IMR-90 (cell line): ENCODE measurements at regions of chr14 and their contacts with region 1.

Region 1: GRCh38 chr14:38208618-38209562 is 1.2 kb downstream of the SSTR1 start:
- DNase-seq: peak; percentile 74
- ATAC-seq: peak; percentile 79
- H3K4me3 ChIP-seq: peak overlapping the region; percentile 61
- H3K27ac ChIP-seq: peak overlapping the region; percentile 8; the same call in 1 of the 2 replicates
- H3K4me1 ChIP-seq: peaks cover 11% of the 10 kb centered on the region; the same call in 1 of the 2 replicates
- H3K27me3 ChIP-seq: no peaks in the 10 kb centered on the region
- CTCF ChIP-seq: peak; percentile 53
- POLR2A ChIP-seq: no peak
- RAD21 ChIP-seq: peak; percentile 63

Region 2: DNA sequence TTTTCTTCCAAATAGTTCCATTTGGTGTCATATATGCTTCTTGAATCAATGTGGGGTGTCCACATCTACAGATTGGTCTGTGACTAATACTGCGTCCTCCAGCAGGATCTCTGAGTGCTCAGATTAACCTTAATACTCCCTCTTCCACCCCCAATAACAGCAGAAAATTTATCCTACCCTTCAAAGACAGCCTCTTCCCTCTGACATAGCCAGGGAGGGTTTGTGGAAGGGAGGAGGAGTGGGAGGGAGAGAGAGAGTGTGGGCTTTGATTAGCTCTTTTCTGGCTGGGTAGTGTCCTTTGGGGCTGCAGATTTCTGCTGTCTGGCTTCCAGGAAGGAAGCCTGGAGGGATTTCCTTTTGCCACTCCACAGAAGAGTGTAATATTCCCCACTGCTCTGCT is 392.8 kb before region 1 on chr14:
- CTCF ChIA-PET with region 1: no interaction called
- POLR2A ChIA-PET with region 1: no interaction called
- dilution Hi-C with region 1: no loop called
- in situ Hi-C with region 1: no loop called
- intact Hi-C with region 1: no loop called
- DNase-seq: no peak
- ATAC-seq: no peak
- H3K4me3 ChIP-seq: no peak overlapping the region
- H3K27ac ChIP-seq: no peak overlapping the region
- H3K4me1 ChIP-seq: no peaks in the 10 kb centered on the region
- H3K27me3 ChIP-seq: peaks cover 2% of the 10 kb centered on the region; the same call in 1 of the 2 replicates
- CTCF ChIP-seq: no peak
- POLR2A ChIP-seq: no peak
- RAD21 ChIP-seq: no peak

Region 3: DNA sequence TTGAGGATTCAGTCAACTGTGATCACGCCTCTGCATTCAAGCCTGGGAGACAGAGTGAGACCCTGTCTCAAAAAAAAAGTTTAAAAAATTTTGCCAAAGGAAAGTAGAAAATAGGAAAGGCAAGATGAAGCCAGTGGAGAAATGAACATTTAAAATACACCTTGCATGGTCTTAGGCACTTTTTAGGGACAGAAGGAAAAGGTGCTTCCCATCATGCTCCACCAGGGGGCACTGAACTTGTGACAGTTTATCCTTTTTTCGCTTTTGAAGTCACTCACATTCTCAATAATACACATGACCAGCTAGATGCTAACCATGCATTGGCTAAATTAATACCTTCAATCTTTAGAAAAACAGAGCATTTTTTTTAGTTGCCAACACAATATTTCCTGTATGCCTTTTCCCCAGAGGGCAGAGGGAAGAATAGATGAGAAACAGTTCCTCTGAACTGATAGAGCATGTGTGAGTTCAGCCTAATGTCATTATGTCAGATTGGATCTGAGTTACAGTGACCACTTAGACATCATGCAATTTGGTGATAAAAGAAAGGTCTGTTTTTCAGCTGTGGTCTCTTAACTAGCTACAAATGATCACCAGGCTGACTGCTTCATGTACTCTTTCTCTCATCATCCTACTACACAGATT is 222.9 kb before region 1 on chr14:
- CTCF ChIA-PET with region 1: no interaction called
- POLR2A ChIA-PET with region 1: no interaction called
- dilution Hi-C with region 1: no loop called
- in situ Hi-C with region 1: no loop called
- intact Hi-C with region 1: loop called (anchors 1 kb)
- DNase-seq: peak; percentile 65
- ATAC-seq: peak; percentile 62; the same call in 1 of the 2 replicates
- H3K4me3 ChIP-seq: no peak overlapping the region
- H3K27ac ChIP-seq: no peak overlapping the region
- H3K4me1 ChIP-seq: no peaks in the 10 kb centered on the region
- H3K27me3 ChIP-seq: no peaks in the 10 kb centered on the region
- CTCF ChIP-seq: peak; percentile 77
- POLR2A ChIP-seq: no peak
- RAD21 ChIP-seq: peak; percentile 70

Region 4: DNA sequence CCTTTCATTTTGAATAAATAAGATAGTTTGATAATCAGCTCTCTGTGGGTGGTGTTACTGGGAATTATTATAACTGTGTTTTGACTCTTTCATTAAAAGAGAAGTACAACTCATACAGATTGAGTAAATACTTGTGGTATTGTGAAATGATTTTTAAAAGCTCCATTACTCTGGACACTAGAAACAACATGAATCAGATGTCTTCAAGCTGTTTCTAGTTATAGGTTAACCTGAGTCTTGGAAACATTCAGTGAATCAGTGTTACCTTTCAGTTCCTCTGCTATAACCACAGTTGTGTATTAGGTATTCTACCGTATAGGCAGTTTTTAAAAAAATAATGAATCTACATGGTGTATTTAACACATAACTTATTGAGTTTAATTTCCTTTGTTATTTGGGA is 129.6 kb before region 1 on chr14:
- CTCF ChIA-PET with region 1: no interaction called
- POLR2A ChIA-PET with region 1: no interaction called
- dilution Hi-C with region 1: no loop called
- in situ Hi-C with region 1: no loop called
- intact Hi-C with region 1: no loop called
- DNase-seq: peak; percentile 43
- ATAC-seq: peak; percentile 61
- H3K4me3 ChIP-seq: no peak overlapping the region
- H3K27ac ChIP-seq: no peak overlapping the region
- H3K4me1 ChIP-seq: peaks cover 2% of the 10 kb centered on the region; the same call in 1 of the 2 replicates
- H3K27me3 ChIP-seq: no peaks in the 10 kb centered on the region
- CTCF ChIP-seq: no peak
- POLR2A ChIP-seq: no peak
- RAD21 ChIP-seq: no peak

Region 5: GRCh38 chr14:38290601-38291190 is 81.8 kb after region 1 on chr14:
- CTCF ChIA-PET with region 1: interaction called, 3 read pairs
- POLR2A ChIA-PET with region 1: no interaction called
- dilution Hi-C with region 1: no loop called
- in situ Hi-C with region 1: no loop called
- intact Hi-C with region 1: loop called (anchors 2 kb)
- DNase-seq: peak; percentile 98
- ATAC-seq: peak; percentile 76
- H3K4me3 ChIP-seq: no peak overlapping the region
- H3K27ac ChIP-seq: peak overlapping the region; percentile 27; the same call in 1 of the 2 replicates
- H3K4me1 ChIP-seq: peaks cover 6% of the 10 kb centered on the region; the same call in 1 of the 2 replicates
- H3K27me3 ChIP-seq: no peaks in the 10 kb centered on the region
- CTCF ChIP-seq: no peak
- POLR2A ChIP-seq: no peak
- RAD21 ChIP-seq: no peak; the same call in 1 of the 2 replicates

Region 6: GRCh38 chr14:38405851-38406635 is 197.2 kb after region 1 on chr14:
- CTCF ChIA-PET with region 1: no interaction called
- POLR2A ChIA-PET with region 1: no interaction called
- dilution Hi-C with region 1: no loop called
- in situ Hi-C with region 1: no loop called
- intact Hi-C with region 1: loop called (anchors 1 kb)
- DNase-seq: peak; percentile 66
- ATAC-seq: peak; percentile 40
- H3K4me3 ChIP-seq: no peak overlapping the region
- H3K27ac ChIP-seq: peak overlapping the region; percentile 66
- H3K4me1 ChIP-seq: peaks cover 17% of the 10 kb centered on the region
- H3K27me3 ChIP-seq: no peaks in the 10 kb centered on the region
- CTCF ChIP-seq: no peak
- POLR2A ChIP-seq: no peak
- RAD21 ChIP-seq: no peak

Region 7: DNA sequence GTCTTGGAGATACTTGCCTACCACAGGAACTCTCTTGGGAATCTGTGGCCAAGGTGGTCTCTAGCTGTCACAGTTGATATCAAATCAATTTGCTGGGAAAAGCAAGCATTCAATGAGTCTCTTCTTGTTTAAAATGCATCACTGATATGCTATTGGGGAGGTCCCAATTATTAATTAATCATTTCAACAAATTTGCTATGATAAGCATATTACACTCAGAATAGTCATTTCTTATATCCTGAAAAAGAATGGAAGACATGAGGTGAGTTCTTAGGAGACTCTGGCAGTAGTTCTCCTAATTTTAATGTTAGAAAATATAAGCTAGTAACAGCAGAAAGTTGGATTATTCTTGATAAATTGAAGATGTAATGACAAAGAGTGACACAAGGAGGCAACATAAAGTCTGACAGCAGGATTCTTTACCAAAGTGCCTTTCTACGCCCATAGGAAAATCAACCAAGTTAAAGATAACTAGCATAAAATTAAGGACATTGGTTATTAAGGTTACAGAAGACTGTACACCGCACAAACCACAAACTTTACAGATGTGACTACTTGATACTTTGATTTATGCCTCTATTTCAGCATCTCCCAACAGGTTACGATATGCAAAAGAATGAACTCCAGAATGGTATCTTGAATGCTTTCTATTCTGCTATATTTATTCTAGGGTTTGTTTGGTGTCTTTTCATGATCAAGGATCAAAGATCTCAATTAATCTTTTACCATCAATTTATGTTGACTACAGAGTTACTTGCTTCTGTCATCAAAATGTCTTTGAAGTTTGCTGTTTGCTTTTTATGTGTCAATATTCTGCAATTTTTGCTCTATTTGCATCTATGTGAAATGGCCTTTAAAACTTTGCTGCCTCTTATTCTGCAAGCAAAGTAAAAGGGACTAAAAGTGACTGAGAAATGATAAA is 396.6 kb after region 1 on chr14:
- CTCF ChIA-PET with region 1: interaction called, 4 read pairs
- POLR2A ChIA-PET with region 1: no interaction called
- dilution Hi-C with region 1: no loop called
- in situ Hi-C with region 1: no loop called
- intact Hi-C with region 1: loop called (anchors 1 kb)
- DNase-seq: no peak
- ATAC-seq: no peak
- H3K4me3 ChIP-seq: no peak overlapping the region
- H3K27ac ChIP-seq: no peak overlapping the region
- H3K4me1 ChIP-seq: no peaks in the 10 kb centered on the region
- H3K27me3 ChIP-seq: no peaks in the 10 kb centered on the region
- CTCF ChIP-seq: 0 out of 2 replicates have a peak, but pooled peaks have one; percentile 7
- POLR2A ChIP-seq: no peak
- RAD21 ChIP-seq: no peak

Region 8: GRCh38 chr14:38721822-38722431 is 513.0 kb after region 1 on chr14:
- CTCF ChIA-PET with region 1: no interaction called
- POLR2A ChIA-PET with region 1: no interaction called
- dilution Hi-C with region 1: no loop called
- in situ Hi-C with region 1: no loop called
- intact Hi-C with region 1: loop called (anchors 2 kb)
- DNase-seq: peak; percentile 31
- ATAC-seq: peak; percentile 92
- H3K4me3 ChIP-seq: no peak overlapping the region
- H3K27ac ChIP-seq: no peak overlapping the region
- H3K4me1 ChIP-seq: no peaks in the 10 kb centered on the region
- H3K27me3 ChIP-seq: no peaks in the 10 kb centered on the region
- CTCF ChIP-seq: peak; percentile 69
- POLR2A ChIP-seq: no peak
- RAD21 ChIP-seq: peak; percentile 62